Colonic mucosa (tissue), 4 donors: ENCODE measurements at regions of chr21 and their contacts with region 1.

Region 1: DNA sequence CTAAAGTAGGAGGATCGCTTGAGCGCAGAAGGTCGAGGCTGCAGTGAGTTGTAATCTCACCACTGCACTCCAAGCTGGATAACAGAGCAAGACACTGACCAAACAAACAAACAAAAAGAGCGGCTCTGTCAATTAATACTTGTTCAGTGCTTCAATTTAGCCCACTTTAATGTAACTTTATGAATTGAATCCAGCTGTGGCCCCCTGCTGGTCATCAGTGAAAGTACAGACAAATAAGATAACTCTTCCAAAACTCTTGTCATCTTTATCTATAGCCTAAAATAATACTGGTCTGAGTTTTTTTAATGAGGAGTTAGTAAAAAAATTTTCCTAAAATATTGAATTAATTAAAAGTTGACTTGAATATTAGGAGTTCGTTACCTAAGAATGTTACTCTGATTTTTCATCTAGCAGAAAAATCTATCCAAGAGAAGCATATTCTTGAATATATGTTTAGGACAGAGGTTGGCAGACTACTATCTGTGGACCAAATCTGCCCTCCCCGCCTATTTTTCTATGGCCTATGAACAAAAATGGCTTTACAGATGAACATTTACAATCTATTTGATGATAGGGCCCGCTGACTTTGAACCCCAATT is 26.1 kb downstream of the ATP5PF start:
- DNase-seq: peak; percentile 32
- H3K4me3 ChIP-seq: no peak overlapping the region
- H3K27ac ChIP-seq: no peak overlapping the region
- H3K4me1 ChIP-seq: no peaks in the 10 kb centered on the region
- H3K27me3 ChIP-seq: no peaks in the 10 kb centered on the region
- CTCF ChIP-seq: peak; percentile 82

Region 2: GRCh38 chr21:24785033-24785432 is 923.5 kb before region 1 on chr21:
- intact Hi-C with region 1: no loop called
- DNase-seq: no peak
- H3K4me3 ChIP-seq: no peak overlapping the region
- H3K27ac ChIP-seq: no peak overlapping the region
- H3K4me1 ChIP-seq: no peaks in the 10 kb centered on the region
- H3K27me3 ChIP-seq: no peaks in the 10 kb centered on the region
- CTCF ChIP-seq: no peak

Region 3: DNA sequence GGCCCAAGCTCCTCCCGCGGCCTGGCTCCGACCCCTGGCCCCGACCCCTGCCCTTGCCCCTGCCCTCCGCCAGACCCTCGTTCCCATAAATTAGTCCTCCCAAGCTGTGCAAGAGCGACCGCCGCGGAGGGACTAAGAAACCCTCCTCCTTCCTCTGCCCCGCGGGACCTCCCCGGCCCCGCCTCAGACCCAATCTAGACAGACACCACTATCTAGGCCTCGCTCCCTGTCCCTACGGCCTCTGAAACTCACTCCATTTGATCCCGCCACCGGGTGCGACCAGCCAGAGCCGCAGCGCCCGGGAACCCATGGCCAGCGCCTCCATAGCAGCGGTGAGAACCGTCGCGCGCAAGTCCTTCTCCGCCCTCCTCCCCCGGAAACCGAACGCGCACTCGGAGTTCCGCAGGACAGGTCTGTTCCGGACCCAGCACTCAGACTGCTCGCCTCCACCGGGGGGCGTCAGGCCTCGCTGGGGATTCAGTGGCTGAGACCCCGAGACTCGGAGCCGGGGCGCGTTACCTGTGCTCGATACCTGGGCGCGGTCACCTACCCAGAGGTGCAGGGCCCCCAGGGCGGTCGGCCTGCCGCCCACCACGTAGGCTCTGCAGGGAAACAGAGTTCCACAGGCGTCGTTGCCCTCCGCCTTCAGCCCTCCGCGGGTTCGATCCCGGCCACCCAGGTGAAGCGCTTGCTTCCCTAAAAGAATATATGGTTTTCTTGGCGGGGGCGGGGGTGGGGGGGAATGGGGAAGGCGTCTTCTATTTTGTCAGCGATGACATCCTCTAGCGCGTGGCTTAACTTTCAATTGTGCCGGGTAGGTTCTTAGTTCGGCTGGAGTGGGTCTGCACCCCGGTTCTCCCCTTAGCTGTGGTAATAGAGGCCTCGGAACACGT is 101.2 kb before region 1 on chr21 and contains the start of gene MRPL39:
- intact Hi-C with region 1: loop called (anchors 2 kb)
- DNase-seq: peak; percentile 89
- H3K4me3 ChIP-seq: peak within 1 kb of the TSS; percentile 91
- H3K27ac ChIP-seq: peak within 1 kb of the TSS; percentile 64
- H3K4me1 ChIP-seq: peaks cover 8% of the 10 kb centered on the region
- H3K27me3 ChIP-seq: no peaks in the 10 kb centered on the region
- CTCF ChIP-seq: peak; percentile 39
- total RNA-seq, gene MRPL39: 44.0 to 50.2 TPM